HCT116 (cell line): ENCODE measurements at regions of chr1 and their contacts with region 1.

Region 1: DNA sequence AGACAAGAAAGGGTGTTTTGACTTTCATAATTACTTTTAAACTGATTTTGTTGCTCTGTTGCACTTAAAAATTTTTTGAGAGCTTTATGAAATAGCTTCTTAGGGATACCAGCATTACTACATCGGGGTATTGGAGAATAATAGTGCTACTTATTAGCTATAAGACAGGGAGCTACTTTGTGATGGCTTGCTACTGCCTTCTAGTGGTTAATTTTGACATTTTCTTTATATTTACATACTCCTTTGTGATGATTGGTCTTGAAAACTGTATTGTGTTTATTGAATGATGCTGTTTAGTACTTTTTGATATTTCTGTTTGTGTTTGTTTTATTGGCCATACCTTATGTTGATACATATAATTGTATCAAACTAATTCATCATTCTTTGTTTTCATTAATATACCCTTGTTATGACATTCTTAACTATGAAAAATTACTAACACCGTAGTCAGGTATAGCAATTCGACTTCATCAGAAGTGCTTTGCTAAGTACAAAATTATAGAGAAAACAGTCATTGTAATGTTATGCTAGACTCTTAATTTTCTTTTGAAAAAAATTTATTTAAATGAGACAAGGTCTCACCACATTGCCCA is 85.5 kb downstream of the CLIC4 start:
- DNase-seq: peak; percentile 68
- ATAC-seq: peak; percentile 84
- H3K4me3 ChIP-seq: no peak overlapping the region
- H3K27ac ChIP-seq: no peak overlapping the region
- H3K4me1 ChIP-seq: peaks cover 0 to 14% of the 10 kb centered on the region in 2 experiments; a peak in 2 of 4 replicates
- H3K27me3 ChIP-seq: no peaks in the 10 kb centered on the region
- CTCF ChIP-seq: peak; percentile 59 to 92 (median 82); a peak in 5 of 6 replicates
- POLR2A ChIP-seq: no peak
- RAD21 ChIP-seq: peak; percentile 92

Region 2: DNA sequence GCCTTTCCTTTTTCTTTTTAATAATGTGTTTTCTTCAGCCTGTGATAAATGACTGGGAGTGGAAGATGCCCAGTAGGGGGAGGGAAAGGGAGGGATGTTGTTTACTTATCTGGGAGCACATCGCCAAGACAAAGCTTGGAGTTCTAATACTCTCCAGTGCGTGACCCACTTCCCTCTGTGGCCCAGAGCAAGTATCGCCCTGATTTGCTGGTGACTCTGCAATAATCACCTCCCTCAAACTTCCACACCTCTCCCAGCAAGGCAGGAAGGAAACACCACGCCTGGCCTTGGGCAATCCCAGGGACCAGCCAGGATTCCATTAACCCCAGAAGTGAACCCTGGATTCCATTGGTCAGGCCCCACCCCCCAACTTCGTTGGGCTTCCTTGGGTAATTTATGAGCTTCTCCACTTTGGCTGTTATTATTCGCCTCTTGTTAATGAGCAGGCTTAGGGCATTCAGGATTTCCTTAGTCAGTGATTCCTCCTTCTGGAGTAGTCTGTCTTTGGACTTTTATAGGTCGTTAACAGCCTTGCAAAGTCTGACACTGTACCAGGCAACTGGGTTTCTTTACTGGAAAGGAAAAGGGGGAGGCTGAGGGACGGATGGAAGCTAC is 535.9 kb before region 1 on chr1:
- CTCF ChIA-PET with region 1: no interaction called
- POLR2A ChIA-PET with region 1: no interaction called
- RAD21 ChIA-PET with region 1: no interaction called
- intact Hi-C with region 1: no loop called
- DNase-seq: no peak
- ATAC-seq: 0 out of 2 replicates have a peak, but pooled peaks have one; percentile 16
- H3K4me3 ChIP-seq: no peak overlapping the region
- H3K27ac ChIP-seq: no peak overlapping the region
- H3K4me1 ChIP-seq: peaks cover 15 to 42% of the 10 kb centered on the region in 2 experiments
- H3K27me3 ChIP-seq: peaks cover 9% of the 10 kb centered on the region; the same call in 1 of the 2 replicates
- CTCF ChIP-seq: no peak
- POLR2A ChIP-seq: no peak
- RAD21 ChIP-seq: no peak

Region 3: DNA sequence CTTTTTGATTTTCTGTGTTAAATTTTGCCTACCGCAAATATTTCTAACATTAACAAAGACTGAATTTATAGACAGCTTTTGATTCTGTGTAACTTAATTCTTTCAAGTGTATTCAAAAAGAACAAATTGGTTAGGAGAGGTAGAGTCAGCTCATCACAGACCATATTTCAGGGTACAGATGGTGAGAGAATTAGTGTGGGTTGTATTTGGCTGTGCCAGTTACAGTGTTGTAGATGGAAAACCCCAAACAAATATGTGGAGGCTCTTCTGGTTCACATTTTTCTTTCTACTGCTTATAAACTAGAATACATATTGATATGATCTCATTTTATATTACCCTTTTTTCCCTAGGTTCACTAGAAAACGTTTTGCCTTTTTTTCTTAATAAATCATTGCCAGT is 317.1 kb before region 1 on chr1:
- CTCF ChIA-PET with region 1: no interaction called
- POLR2A ChIA-PET with region 1: no interaction called
- RAD21 ChIA-PET with region 1: no interaction called
- intact Hi-C with region 1: loop called (anchors 10 kb)
- DNase-seq: no peak
- ATAC-seq: no peak
- H3K4me3 ChIP-seq: no peak overlapping the region
- H3K27ac ChIP-seq: no peak overlapping the region
- H3K4me1 ChIP-seq: peaks cover 18 to 19% of the 10 kb centered on the region in 2 experiments
- H3K27me3 ChIP-seq: no peaks in the 10 kb centered on the region
- CTCF ChIP-seq: no peak
- POLR2A ChIP-seq: no peak
- RAD21 ChIP-seq: no peak

Region 4: GRCh38 chr1:24541711-24542346 is 288.9 kb before region 1 on chr1:
- CTCF ChIA-PET with region 1: interaction called, 17 read pairs
- POLR2A ChIA-PET with region 1: no interaction called
- RAD21 ChIA-PET with region 1: no interaction called
- intact Hi-C with region 1: no loop called
- DNase-seq: no peak
- ATAC-seq: peak; percentile 56; the same call in 1 of the 2 replicates
- H3K4me3 ChIP-seq: 0 out of 4 replicates have a peak overlapping the region, but pooled peaks of 1 of the 2 experiments have one; percentile 36
- H3K27ac ChIP-seq: peak overlapping the region; percentile 30
- H3K4me1 ChIP-seq: peaks cover 23 to 48% of the 10 kb centered on the region in 2 experiments
- H3K27me3 ChIP-seq: no peaks in the 10 kb centered on the region
- CTCF ChIP-seq: peak; percentile 68 to 92 (median 82)
- POLR2A ChIP-seq: no peak
- RAD21 ChIP-seq: peak; percentile 69

Region 5: DNA sequence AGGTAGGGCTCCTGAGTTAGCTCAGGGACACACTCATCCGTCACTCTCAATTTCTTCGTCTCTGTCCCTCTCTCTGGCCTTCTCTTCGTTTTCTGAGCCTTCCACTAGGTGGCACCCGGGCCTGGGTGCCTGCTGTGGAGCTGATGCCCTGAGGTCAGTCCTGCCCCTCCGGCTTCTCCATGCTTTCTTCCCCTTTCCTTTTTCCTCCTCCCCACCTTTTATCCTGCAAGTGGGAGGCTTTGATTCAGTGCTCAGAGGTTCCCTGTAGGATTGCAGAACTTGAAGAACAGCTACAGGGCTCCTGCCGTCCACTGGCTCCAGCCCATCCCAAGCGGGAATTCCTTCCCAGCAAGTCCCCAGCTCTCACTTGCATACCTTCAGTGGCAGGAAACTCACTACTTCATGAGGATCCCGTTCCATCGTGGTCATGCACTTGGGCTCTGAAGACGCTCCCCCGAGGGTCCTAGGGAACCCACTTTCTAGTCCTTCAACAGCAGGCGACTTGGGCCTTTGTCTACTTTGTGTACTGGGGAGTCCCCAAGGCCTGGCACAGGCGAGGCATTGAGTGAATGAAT is 142.1 kb before region 1 on chr1:
- CTCF ChIA-PET with region 1: interaction called, 174 read pairs
- POLR2A ChIA-PET with region 1: interaction called, 9 read pairs
- RAD21 ChIA-PET with region 1: interaction called, 19 to 21 read pairs
- intact Hi-C with region 1: loop called (anchors 2 kb)
- DNase-seq: peak; percentile 36
- ATAC-seq: peak; percentile 80
- H3K4me3 ChIP-seq: no peak overlapping the region
- H3K27ac ChIP-seq: no peak overlapping the region
- H3K4me1 ChIP-seq: peaks cover 7 to 29% of the 10 kb centered on the region in 2 experiments
- H3K27me3 ChIP-seq: no peaks in the 10 kb centered on the region
- CTCF ChIP-seq: peak; percentile 80 to 88 (median 87); a peak in 5 of 6 replicates
- POLR2A ChIP-seq: no peak
- RAD21 ChIP-seq: peak; percentile 94

Region 6: GRCh38 chr1:24744911-24745710 is 85.7 kb before region 1 on chr1 and contains the start of gene CLIC4:
- CTCF ChIA-PET with region 1: interaction called, 8 read pairs
- POLR2A ChIA-PET with region 1: no interaction called
- RAD21 ChIA-PET with region 1: no interaction called
- intact Hi-C with region 1: loop called (anchors 5 kb)
- DNase-seq: peak; percentile 94
- ATAC-seq: peak; percentile 93
- H3K4me3 ChIP-seq: peak within 1 kb of the TSS; percentile 62 to 80
- H3K27ac ChIP-seq: peak within 1 kb of the TSS; percentile 67
- H3K4me1 ChIP-seq: peaks cover 20 to 42% of the 10 kb centered on the region in 2 experiments
- H3K27me3 ChIP-seq: no peaks in the 10 kb centered on the region
- CTCF ChIP-seq: no peak
- POLR2A ChIP-seq: peak; percentile 42
- RAD21 ChIP-seq: peak; percentile 54
- total RNA-seq, gene CLIC4: 77.2 TPM

Region 7: DNA sequence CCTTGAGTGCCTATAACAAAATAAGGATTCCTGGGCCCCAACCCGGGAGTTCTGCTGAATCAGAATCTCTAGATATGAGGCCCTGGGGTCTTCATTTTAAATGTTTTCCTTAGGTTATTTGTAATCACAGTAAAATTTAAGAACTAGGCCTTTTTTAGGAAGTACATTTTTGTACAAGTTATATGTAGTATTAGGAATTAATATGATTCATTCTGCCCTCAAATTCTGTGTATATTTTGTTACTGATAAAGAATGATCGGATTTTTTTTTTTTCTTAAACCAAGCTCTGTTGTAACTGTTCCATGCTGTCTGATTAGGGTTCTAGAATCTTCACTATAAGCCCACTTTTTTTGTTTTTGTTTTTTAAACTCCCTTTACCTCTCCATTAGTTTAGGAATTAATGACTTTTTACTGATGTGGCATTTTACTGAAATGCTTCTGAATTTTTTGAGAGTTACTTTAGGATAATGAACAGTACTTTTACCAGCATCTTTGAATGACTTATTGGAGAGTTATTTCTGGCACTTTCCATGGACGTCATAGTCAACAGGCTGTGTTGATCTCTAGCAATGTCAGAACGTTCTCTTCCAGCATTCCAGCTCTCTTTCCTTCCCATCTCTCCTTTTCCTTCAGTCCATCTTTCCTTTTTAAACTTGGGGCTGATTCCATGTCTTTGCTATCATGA is 37.2 kb before region 1 on chr1:
- CTCF ChIA-PET with region 1: no interaction called
- POLR2A ChIA-PET with region 1: no interaction called
- RAD21 ChIA-PET with region 1: no interaction called
- intact Hi-C with region 1: no loop called
- DNase-seq: no peak
- ATAC-seq: no peak
- H3K4me3 ChIP-seq: no peak overlapping the region
- H3K27ac ChIP-seq: no peak overlapping the region
- H3K4me1 ChIP-seq: no peaks in the 10 kb centered on the region
- H3K27me3 ChIP-seq: no peaks in the 10 kb centered on the region
- CTCF ChIP-seq: no peak
- POLR2A ChIP-seq: no peak
- RAD21 ChIP-seq: no peak